ENCODE measurements at regions of chr6 and their contacts with region 1.

Region 1: DNA sequence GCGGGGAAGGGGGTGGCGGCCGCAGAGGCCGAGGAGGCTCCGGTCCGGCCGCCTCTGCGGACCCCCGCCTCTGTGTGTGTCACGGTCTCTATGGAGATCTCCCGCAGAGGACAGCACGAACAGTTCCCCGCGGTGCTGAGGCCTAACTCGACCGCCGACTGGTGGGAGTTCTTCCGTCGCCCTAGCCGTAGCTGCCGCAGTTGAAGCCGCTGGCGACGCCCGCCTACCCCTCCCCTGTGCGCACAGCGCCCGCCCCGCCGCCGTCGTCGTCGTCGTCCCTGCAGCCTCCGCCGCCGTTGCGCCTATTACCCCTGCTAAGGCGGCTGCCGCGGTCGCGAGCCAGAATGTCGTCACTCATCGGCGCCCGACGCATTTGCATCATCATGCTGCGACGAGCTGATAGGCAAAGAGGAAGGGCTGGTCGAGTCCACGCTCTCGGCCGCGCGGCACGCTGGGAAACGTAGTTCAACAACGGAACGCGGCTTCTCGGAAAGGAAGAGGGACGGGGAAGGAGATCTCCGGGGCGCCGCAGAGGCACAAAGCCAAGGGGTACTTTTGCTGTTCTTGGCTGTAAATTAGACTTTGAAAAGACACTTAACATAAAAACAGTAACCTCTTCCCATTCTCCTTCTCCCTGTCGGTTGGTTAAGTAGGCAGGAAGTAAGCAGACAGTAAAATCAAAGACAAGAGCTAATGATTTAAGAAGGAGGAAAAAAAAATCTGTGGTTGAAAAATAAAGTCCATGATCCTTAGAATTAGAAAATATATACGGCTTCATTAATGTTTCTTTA is at the start of gene NUP153:
- DNase-seq: peak; percentile 100
- H3K4me3 Mint-ChIP-seq: peak within 1 kb of the TSS; percentile 91
- H3K27ac Mint-ChIP-seq: peak within 1 kb of the TSS; percentile 95
- H3K4me1 Mint-ChIP-seq: peaks cover 26% of the 10 kb centered on the region
- H3K27me3 Mint-ChIP-seq: peaks cover 1% of the 10 kb centered on the region
- total RNA-seq, gene NUP153: 72.4 to 78.2 TPM

Region 2: GRCh38 chr6:16432075-16433032 is 1274.4 kb before region 1 on chr6:
- CTCF ChIA-PET with region 1: no interaction called
- POLR2A ChIA-PET with region 1: no interaction called
- intact Hi-C with region 1: loop called (anchors 10 kb)
- DNase-seq: peak; percentile 58
- H3K4me3 Mint-ChIP-seq: no peak overlapping the region
- H3K27ac Mint-ChIP-seq: peak overlapping the region; percentile 100
- H3K4me1 Mint-ChIP-seq: peaks cover 66% of the 10 kb centered on the region
- H3K27me3 Mint-ChIP-seq: no peaks in the 10 kb centered on the region

Region 3: DNA sequence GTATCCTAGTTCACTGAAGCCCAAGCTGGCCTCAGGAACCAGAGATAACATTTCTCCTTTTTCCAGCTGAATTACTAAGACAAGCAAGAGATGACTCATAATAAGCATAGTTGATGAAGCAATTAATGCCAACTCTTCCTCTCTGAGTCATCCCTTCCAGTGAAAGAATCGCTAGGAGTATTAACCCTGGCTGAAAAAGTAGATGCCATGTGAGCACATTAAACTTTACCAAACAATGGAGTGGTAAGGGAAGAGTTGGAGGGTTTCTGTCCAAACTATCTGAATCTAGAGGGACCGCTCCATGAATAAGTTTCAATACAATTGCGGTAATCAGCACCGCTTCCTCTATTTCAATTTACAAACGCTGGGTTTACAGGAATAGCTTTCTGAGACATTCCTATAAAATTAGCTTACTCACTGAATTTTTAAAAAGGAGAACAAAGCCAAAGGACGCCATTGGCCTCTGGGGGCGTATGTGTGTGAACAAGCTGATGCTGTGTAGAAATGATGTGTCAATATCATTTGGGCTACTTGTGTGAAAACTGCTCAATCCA is 993.8 kb before region 1 on chr6:
- CTCF ChIA-PET with region 1: no interaction called
- POLR2A ChIA-PET with region 1: no interaction called
- intact Hi-C with region 1: loop called (anchors 5 kb)
- DNase-seq: peak; percentile 62
- H3K4me3 Mint-ChIP-seq: peak overlapping the region; percentile 64
- H3K27ac Mint-ChIP-seq: peak overlapping the region; percentile 92
- H3K4me1 Mint-ChIP-seq: peaks cover 70% of the 10 kb centered on the region
- H3K27me3 Mint-ChIP-seq: no peaks in the 10 kb centered on the region

Region 4: GRCh38 chr6:17653198-17653882 is 53.4 kb before region 1 on chr6:
- CTCF ChIA-PET with region 1: no interaction called
- POLR2A ChIA-PET with region 1: no interaction called
- intact Hi-C with region 1: loop called (anchors 2 kb)
- DNase-seq: no peak
- H3K4me3 Mint-ChIP-seq: no peak overlapping the region
- H3K27ac Mint-ChIP-seq: peak overlapping the region; percentile 72
- H3K4me1 Mint-ChIP-seq: peaks cover 31% of the 10 kb centered on the region
- H3K27me3 Mint-ChIP-seq: no peaks in the 10 kb centered on the region

Region 5: DNA sequence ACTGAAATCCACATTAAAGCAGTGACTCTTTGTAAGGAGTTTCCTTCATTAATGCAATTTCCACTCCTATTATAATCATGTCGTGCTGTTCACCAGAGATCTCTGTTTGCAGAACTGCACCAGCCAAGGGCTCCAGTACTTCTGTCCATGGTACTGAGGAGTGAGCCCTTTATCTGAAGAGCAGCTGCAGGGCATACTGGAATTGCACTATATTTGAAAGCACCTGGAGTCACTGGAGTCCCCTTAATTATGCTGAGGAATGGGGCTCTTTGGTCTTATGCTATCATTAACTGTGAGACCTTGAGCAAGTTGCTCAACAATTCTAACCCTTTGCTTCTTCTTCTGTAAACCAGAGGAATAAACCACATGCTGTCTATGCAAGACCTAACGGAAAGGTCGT is 61.6 kb after region 1 on chr6:
- CTCF ChIA-PET with region 1: no interaction called
- POLR2A ChIA-PET with region 1: no interaction called
- intact Hi-C with region 1: no loop called
- DNase-seq: no peak
- H3K4me3 Mint-ChIP-seq: no peak overlapping the region
- H3K27ac Mint-ChIP-seq: no peak overlapping the region
- H3K4me1 Mint-ChIP-seq: no peaks in the 10 kb centered on the region
- H3K27me3 Mint-ChIP-seq: peaks cover 5% of the 10 kb centered on the region

Region 6: GRCh38 chr6:17808609-17809008 is 101.8 kb after region 1 on chr6:
- CTCF ChIA-PET with region 1: interaction called, 29 read pairs
- POLR2A ChIA-PET with region 1: no interaction called
- intact Hi-C with region 1: loop called (anchors 1 kb)
- DNase-seq: no peak
- H3K4me3 Mint-ChIP-seq: no peak overlapping the region
- H3K27ac Mint-ChIP-seq: no peak overlapping the region
- H3K4me1 Mint-ChIP-seq: no peaks in the 10 kb centered on the region
- H3K27me3 Mint-ChIP-seq: peaks cover 7% of the 10 kb centered on the region

Region 7: GRCh38 chr6:18155150-18155863 is 448.5 kb after region 1 on chr6 and contains the start of gene KDM1B:
- CTCF ChIA-PET with region 1: no interaction called
- POLR2A ChIA-PET with region 1: no interaction called
- intact Hi-C with region 1: loop called (anchors 1 kb)
- DNase-seq: peak; percentile 99
- H3K4me3 Mint-ChIP-seq: peak within 1 kb of the TSS; percentile 97
- H3K27ac Mint-ChIP-seq: peak within 1 kb of the TSS; percentile 87
- H3K4me1 Mint-ChIP-seq: peaks cover 24% of the 10 kb centered on the region
- H3K27me3 Mint-ChIP-seq: no peaks in the 10 kb centered on the region
- total RNA-seq, gene KDM1B: 17.5 to 18.5 TPM

Measured in activated CD4-positive, alpha-beta memory T cell treated with anti-CD3 and anti-CD28 coated beads for 36 hours (primary cell).